Mucosa of descending colon (tissue), 3 donors: ENCODE measurements at regions of chr5 and their contacts with region 1.

Region 1: GRCh38 chr5:90473481-90474234 is 913 bp downstream of the MBLAC2 start:
- DNase-seq: peak; percentile 53 to 74 (median 70)
- ATAC-seq: peak; percentile 44
- H3K4me3 ChIP-seq: peak overlapping the region; percentile 67
- H3K4me1 ChIP-seq: peaks cover 7% of the 10 kb centered on the region
- CTCF ChIP-seq: no peak

Region 2: GRCh38 chr5:90409318-90410177 is 64.1 kb before region 1 on chr5 and contains the start of gene CETN3:
- intact Hi-C with region 1: loop called in 1 of 2 experiments (anchors 2 kb)
- DNase-seq: peak; percentile 94
- ATAC-seq: peak; percentile 96
- H3K4me3 ChIP-seq: peak within 1 kb of the TSS; percentile 73
- H3K4me1 ChIP-seq: peaks cover 5% of the 10 kb centered on the region
- CTCF ChIP-seq: no peak
- total RNA-seq, gene CETN3: 15.0 to 18.7 (median 17.8) TPM